Pancreas (tissue), 10 donors: ENCODE measurements at regions of chr5 and their contacts with region 1.

Region 1: GRCh38 chr5:170434966-170435605 is 45.9 kb upstream of the KCNMB1 start:
- DNase-seq: peak; percentile 23 to 84 (median 64)
- ATAC-seq: peak; percentile 63 to 98 (median 92)
- H3K4me3 ChIP-seq: no peak overlapping the region
- H3K27ac ChIP-seq: no peak overlapping the region
- H3K4me1 ChIP-seq: no peaks in the 10 kb centered on the region
- H3K27me3 ChIP-seq: no peaks in the 10 kb centered on the region
- CTCF ChIP-seq: peak; percentile 94 to 98 (median 96)

Region 2: GRCh38 chr5:170267431-170268152 is 167.5 kb before region 1 on chr5:
- intact Hi-C with region 1: no loop called
- DNase-seq: peak in 5 of 6 donors; percentile 40 to 80 (median 57)
- ATAC-seq: peak in 3 of 4 donors; percentile 80 to 84 (median 80)
- H3K4me3 ChIP-seq: no peak overlapping the region
- H3K27ac ChIP-seq: no peak overlapping the region
- H3K4me1 ChIP-seq: peaks cover 0 to 7% (median 0%) of the 10 kb centered on the region in 3 donors
- H3K27me3 ChIP-seq: peaks cover 0 to 9% (median 0%) of the 10 kb centered on the region in 4 donors
- CTCF ChIP-seq: peak; percentile 72 to 81 (median 76)

Region 3: DNA sequence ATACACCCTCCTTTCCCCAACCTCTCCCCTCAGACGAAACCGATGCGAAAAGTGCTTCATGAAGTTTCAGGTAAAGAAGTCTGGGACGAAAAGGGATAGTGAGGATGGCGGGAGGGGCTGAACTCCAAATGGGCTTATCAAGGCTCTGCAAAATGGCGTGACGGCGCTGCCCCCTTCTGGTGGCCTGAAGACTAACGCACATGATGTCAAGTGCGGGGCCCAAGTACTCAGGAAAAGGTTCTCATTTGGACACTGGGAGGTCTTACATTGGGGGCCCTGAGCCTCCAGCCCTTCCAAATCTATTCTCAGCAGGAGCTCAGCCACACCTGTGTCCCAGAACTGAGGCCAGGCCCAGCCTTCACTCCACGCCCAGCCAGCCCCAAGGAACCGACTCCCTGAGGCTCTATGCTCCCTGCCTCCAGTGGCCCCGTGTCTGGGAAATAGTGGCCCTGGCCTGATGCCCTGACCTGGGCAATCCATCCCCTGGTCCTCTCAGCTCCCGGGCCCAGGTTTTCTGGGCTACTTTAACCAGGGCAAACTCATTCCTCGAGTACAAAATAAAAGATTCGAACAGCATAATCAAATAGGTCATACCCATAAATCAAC is 188.6 kb after region 1 on chr5:
- intact Hi-C with region 1: loop called in 2 of 3 experiments (anchors 5 to 10 kb)
- DNase-seq: peak in 2 of 6 donors; percentile 28 to 66
- ATAC-seq: peak in 3 of 4 donors; percentile 50 to 59 (median 56)
- H3K4me3 ChIP-seq: no peak overlapping the region
- H3K27ac ChIP-seq: no peak overlapping the region
- H3K4me1 ChIP-seq: no peaks in the 10 kb centered on the region
- H3K27me3 ChIP-seq: no peaks in the 10 kb centered on the region
- CTCF ChIP-seq: peak in 2 of 4 donors; percentile 15 to 20

Region 4: DNA sequence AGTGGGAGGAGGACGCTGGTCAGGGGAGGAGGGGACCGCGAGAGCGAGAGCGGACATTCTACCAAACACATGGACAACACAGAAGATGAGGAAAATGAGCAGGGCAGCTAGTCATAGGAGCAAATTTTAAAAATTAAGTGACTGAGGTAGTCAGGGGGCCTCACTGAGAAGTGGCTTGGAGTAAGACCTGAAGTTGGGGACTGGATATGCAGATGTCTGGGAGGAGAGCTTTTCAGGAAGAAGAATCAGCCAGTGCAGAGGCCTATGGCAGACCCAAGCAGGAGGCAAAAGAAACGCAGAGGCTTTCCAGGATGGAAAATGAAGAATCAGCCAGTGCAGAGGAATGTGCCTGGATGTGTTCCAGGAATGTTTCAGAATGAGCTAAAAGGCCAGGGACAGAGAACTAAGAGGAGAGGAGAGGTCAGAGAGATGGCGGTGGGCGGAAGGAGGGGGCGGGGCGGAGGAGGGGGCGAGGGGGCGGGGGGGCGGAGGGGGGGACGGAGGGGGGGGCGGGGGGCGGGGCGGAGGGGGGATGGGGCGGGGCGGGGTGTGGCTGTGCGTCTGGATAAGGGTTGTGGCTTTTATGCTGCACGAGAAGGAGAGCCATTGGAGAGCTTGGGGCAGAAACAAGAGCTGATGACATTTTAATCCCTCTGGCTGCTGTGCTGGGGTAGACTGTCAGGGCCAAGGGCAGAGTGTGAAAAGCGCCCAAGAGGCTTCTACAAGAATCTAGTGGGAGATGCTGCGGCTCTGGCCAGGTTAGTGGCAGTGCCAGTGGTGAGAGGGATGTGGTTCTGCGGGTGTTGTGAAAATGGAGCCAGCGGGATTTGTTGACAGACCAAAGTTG is 198.4 kb after region 1 on chr5:
- intact Hi-C with region 1: loop called (anchors 5 to 10 kb)
- DNase-seq: peak in 3 of 6 donors; percentile 39 to 58 (median 49)
- ATAC-seq: peak; percentile 49 to 79 (median 69)
- H3K4me3 ChIP-seq: peak overlapping the region in 1 of 4 donors; percentile 15
- H3K27ac ChIP-seq: peak overlapping the region; percentile 34 to 64 (median 48)
- H3K4me1 ChIP-seq: no peaks in the 10 kb centered on the region
- H3K27me3 ChIP-seq: no peaks in the 10 kb centered on the region
- CTCF ChIP-seq: peak in 1 of 4 donors; percentile 4